T-cell (primary cell): ENCODE measurements at regions of chr7 and their contacts with region 1.

Region 1: GRCh38 chr7:149028346-149029109 is at the start of gene PDIA4:
- DNase-seq: peak; percentile 97 to 99 (median 98)
- ATAC-seq: peak; percentile 88 to 90 (median 89)
- H3K4me3 ChIP-seq: peak within 1 kb of the TSS; percentile 83 to 85
- H3K4me3 Mint-ChIP-seq: peak within 1 kb of the TSS; percentile 88 to 96 (median 91)
- H3K27ac ChIP-seq: peak within 1 kb of the TSS; percentile 76
- H3K27ac Mint-ChIP-seq: peak within 1 kb of the TSS; percentile 93 to 94
- H3K4me1 ChIP-seq: peaks cover 26 to 37% of the 10 kb centered on the region in 2 experiments
- H3K4me1 Mint-ChIP-seq: peaks cover 25 to 47% (median 41%) of the 10 kb centered on the region in 3 donors
- H3K27me3 ChIP-seq: no peaks in the 10 kb centered on the region
- H3K27me3 Mint-ChIP-seq: no peaks in the 10 kb centered on the region
- total RNA-seq, gene PDIA4: 40.3 to 75.3 (median 68.4) TPM

Region 2: GRCh38 chr7:149171892-149172533 is 143.5 kb after region 1 on chr7:
- CTCF ChIA-PET with region 1: interaction called in 1 of 2 experiments, 10 read pairs
- POLR2A ChIA-PET with region 1: no interaction called
- DNase-seq: no peak
- ATAC-seq: no peak
- H3K4me3 ChIP-seq: no peak overlapping the region
- H3K4me3 Mint-ChIP-seq: no peak overlapping the region
- H3K27ac ChIP-seq: no peak overlapping the region
- H3K27ac Mint-ChIP-seq: no peak overlapping the region
- H3K4me1 ChIP-seq: no peaks in the 10 kb centered on the region
- H3K4me1 Mint-ChIP-seq: no peaks in the 10 kb centered on the region
- H3K27me3 ChIP-seq: no peaks in the 10 kb centered on the region
- H3K27me3 Mint-ChIP-seq: no peaks in the 10 kb centered on the region